AG04450 (cell line): ENCODE measurements at regions of chr1 and their contacts with region 1.

Region 1: DNA sequence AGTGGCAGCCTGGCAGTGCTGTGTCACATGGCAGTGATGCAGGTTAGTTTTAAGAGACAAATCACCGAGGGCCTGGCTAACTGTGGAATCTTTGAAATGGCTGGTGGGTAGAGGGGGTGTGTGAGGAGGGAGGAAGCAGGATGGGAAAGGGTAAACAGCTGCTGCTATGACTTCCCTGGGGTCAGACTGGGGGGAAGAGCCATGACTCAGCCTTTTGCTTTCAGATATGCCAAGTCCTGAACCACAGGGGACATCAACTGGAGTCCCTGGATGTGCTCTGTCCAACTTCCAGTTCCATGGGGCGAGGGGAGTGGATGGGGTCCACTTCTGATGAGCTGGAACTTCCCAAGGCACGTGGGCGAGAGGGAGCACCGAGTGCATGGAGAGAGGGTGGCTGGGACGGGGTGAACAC is 121.1 kb upstream of the ADAR start:
- DNase-seq: no peak
- H3K4me3 ChIP-seq: no peak overlapping the region
- H3K27ac ChIP-seq: peak overlapping the region; percentile 31
- H3K27me3 ChIP-seq: peaks cover 12% of the 10 kb centered on the region
- CTCF ChIP-seq: no peak

Region 2: DNA sequence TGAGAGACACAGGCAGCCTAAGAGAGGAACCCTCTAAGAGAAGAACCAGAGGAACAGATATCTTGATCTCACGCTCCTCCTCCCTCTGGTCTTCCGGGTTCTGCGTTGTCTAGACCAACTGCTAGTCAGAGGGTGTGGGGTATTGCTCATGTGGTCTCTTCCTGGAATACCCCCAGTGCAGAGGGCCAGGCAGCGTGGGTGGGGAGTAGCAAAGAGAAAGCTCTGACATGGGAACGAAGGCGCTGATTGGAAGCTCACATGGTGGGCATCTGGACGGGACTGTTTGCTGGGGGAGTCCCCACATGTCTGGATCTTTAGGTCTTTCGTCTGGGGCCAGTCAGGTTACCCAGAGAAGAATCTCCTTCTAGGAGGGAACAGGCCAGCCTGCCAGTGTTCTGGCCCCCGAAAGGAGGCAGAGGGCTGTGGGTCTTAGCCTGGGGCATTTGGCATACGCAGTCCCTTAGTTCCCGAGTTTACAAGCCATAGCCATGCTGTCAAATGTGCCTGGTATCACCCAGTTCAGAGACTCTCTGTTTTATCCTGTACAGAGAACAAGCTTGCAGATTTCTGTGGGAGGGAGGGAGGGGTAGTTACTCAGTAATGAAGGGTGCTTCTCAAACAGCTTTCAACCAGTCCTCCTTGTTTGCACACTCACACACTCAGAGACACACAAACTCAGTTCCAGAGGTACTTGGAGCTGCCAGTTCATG is 342.2 kb before region 1 on chr1:
- CTCF ChIA-PET with region 1: no interaction called
- POLR2A ChIA-PET with region 1: no interaction called
- DNase-seq: no peak
- H3K4me3 ChIP-seq: no peak overlapping the region
- H3K27ac ChIP-seq: no peak overlapping the region
- H3K27me3 ChIP-seq: peaks cover 6% of the 10 kb centered on the region
- CTCF ChIP-seq: no peak

Region 3: DNA sequence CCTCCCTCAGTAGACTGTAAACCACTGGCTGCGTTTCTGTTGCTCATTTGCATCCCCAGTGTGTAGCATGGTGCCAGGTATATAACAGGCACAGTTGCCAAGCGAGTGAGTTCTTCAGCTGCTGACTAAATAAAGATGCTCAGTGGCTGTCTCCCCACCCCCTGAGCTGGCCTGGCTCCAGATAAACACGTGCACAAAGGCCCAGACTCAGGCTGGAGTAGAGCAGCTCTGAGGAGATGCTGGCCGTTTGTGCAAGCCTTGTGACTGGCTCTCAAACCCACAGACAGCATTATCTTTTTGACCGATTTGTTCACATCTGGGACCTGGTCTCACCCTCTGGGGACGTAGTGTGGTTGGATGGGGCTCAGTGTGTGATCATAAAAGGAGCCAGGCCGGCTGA is 154.3 kb before region 1 on chr1:
- CTCF ChIA-PET with region 1: no interaction called
- POLR2A ChIA-PET with region 1: no interaction called
- DNase-seq: no peak
- H3K4me3 ChIP-seq: no peak overlapping the region
- H3K27ac ChIP-seq: no peak overlapping the region
- H3K27me3 ChIP-seq: peaks cover 13% of the 10 kb centered on the region
- CTCF ChIP-seq: no peak

Region 4: DNA sequence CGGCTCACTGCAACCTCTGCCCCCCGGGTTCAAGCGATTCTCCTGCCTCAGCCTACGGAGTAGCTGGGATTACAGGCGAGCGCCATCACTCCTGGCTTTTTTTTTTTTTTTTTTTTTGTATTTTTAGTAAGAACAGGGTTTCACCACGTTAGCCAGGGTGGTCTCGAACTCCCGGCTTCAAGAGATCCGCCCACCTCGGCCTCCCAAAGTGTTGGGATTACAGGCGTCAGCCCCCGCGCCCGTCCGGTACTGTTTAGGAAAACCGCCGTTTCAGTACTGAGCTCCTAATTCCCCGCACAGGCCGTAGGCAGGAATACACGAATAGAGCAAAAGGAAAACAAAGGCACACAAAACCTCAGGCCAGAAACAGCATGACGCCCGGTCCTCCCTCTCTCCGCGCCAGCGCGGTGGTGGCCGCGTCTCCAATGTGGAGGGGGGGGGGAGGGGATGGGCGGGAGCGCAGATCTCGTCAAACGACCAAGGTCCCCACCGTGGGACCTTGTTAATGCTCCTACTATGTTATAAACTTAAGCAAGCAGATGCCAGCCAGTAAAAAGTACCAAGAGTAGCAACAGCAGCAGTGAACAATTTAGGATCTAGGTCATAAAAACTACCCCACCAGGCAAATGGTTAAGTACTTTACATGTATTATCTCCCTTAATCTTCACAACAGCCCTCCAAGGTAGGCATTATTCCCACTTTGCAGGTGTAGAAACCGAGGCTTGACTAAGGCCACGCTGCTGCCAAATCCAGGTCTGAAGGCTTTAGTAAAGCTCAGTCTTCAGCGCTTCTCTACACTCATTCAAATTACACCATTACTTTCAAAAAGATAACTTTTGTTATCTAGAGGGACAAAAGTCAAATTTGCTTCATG is 120.4 kb before region 1 on chr1:
- CTCF ChIA-PET with region 1: no interaction called
- POLR2A ChIA-PET with region 1: interaction called, 11 read pairs
- DNase-seq: no peak
- H3K4me3 ChIP-seq: peak overlapping the region; percentile 93
- H3K27ac ChIP-seq: peak overlapping the region; percentile 90
- H3K27me3 ChIP-seq: no peaks in the 10 kb centered on the region
- CTCF ChIP-seq: no peak

Region 5: GRCh38 chr1:154747740-154748404 is 18.8 kb after region 1 on chr1:
- CTCF ChIA-PET with region 1: no interaction called
- POLR2A ChIA-PET with region 1: no interaction called
- DNase-seq: no peak
- H3K4me3 ChIP-seq: no peak overlapping the region
- H3K27ac ChIP-seq: no peak overlapping the region
- H3K27me3 ChIP-seq: peaks cover 83% of the 10 kb centered on the region
- CTCF ChIP-seq: no peak